ENCODE measurements at regions of chr4 and their contacts with region 1.

Region 1: GRCh38 chr4:38132107-38132673 is 172.0 kb downstream of the PTTG2 start:
- DNase-seq: peak; percentile 74
- H3K4me3 Mint-ChIP-seq: peak overlapping the region; percentile 2
- H3K27ac Mint-ChIP-seq: peak overlapping the region; percentile 93
- H3K4me1 Mint-ChIP-seq: peaks cover 63% of the 10 kb centered on the region
- H3K27me3 Mint-ChIP-seq: no peaks in the 10 kb centered on the region

Region 2: GRCh38 chr4:36921474-36922254 is 1210.5 kb before region 1 on chr4:
- intact Hi-C with region 1: no loop called
- DNase-seq: no peak
- H3K4me3 Mint-ChIP-seq: no peak overlapping the region
- H3K27ac Mint-ChIP-seq: no peak overlapping the region
- H3K4me1 Mint-ChIP-seq: no peaks in the 10 kb centered on the region
- H3K27me3 Mint-ChIP-seq: no peaks in the 10 kb centered on the region

Region 3: DNA sequence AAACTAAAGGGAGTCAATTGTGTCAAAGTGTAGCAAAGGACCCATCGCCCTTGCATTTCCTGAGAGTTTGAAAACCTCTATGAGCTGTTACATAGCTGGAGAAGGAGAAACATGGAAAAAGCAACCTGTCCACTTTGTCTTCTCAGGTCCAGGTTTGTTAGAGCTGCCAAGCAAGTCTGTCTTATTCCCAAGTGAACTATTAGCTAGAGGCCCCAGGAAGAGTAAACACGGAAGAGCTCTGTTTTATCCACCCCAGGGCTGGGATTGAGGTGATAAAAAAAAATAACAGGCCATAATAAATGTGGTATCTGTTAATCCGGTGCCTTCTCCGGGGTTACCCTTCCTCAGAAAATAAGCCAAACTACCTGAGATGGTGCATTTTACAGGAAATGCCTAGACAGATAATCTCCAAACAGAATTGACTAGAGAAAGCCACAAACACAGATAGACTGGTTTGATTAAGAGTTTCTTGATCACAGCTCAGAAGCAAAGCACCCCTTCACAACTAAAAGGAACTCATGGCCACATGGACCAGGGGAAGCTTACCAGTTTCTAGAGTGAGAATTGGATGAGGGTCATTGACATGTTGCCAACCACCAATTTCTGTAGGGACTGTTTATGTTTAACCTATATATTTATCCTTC is 410.1 kb before region 1 on chr4:
- intact Hi-C with region 1: loop called (anchors 1 kb)
- DNase-seq: peak; percentile 20
- H3K4me3 Mint-ChIP-seq: no peak overlapping the region
- H3K27ac Mint-ChIP-seq: no peak overlapping the region
- H3K4me1 Mint-ChIP-seq: peaks cover 33% of the 10 kb centered on the region
- H3K27me3 Mint-ChIP-seq: peaks cover 10% of the 10 kb centered on the region

Region 4: GRCh38 chr4:38062088-38062893 is 69.9 kb before region 1 on chr4:
- intact Hi-C with region 1: loop called (anchors 5 kb)
- DNase-seq: peak; percentile 36
- H3K4me3 Mint-ChIP-seq: peak overlapping the region; percentile 67
- H3K27ac Mint-ChIP-seq: peak overlapping the region; percentile 61
- H3K4me1 Mint-ChIP-seq: peaks cover 16% of the 10 kb centered on the region
- H3K27me3 Mint-ChIP-seq: no peaks in the 10 kb centered on the region

Region 5: GRCh38 chr4:38075370-38076152 is 56.6 kb before region 1 on chr4:
- intact Hi-C with region 1: no loop called
- DNase-seq: no peak
- H3K4me3 Mint-ChIP-seq: no peak overlapping the region
- H3K27ac Mint-ChIP-seq: no peak overlapping the region
- H3K4me1 Mint-ChIP-seq: peaks cover 23% of the 10 kb centered on the region
- H3K27me3 Mint-ChIP-seq: no peaks in the 10 kb centered on the region

Region 6: GRCh38 chr4:38179690-38180377 is 47.6 kb after region 1 on chr4:
- intact Hi-C with region 1: loop called (anchors 1 kb)
- DNase-seq: peak; percentile 59
- H3K4me3 Mint-ChIP-seq: no peak overlapping the region
- H3K27ac Mint-ChIP-seq: no peak overlapping the region
- H3K4me1 Mint-ChIP-seq: peaks cover 23% of the 10 kb centered on the region
- H3K27me3 Mint-ChIP-seq: peaks cover 25% of the 10 kb centered on the region

Region 7: DNA sequence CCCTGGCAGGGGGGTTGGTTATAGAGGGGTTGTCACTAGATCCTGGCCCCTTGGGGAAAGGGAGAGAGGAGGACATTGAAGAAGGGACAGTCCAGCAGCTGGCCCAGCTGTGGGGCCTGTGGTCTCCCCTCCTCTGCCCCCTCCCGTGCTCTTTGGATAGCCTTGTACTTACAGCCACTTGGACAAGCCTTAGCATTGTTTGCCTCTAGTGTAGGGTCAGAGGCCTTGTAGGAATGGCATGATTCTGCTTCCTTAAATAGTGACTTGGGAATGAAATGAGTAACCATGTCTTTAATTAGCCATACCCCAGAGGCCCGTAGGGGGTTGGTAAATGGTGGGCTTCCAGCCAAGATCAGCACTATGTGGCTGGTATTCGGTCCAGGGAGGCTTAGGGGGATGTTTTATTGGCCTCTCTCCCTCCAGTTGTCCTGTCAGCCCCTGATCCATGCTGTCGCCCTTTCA is 58.6 kb after region 1 on chr4:
- intact Hi-C with region 1: no loop called
- DNase-seq: no peak
- H3K4me3 Mint-ChIP-seq: no peak overlapping the region
- H3K27ac Mint-ChIP-seq: no peak overlapping the region
- H3K4me1 Mint-ChIP-seq: no peaks in the 10 kb centered on the region
- H3K27me3 Mint-ChIP-seq: peaks cover 29% of the 10 kb centered on the region

Region 8: DNA sequence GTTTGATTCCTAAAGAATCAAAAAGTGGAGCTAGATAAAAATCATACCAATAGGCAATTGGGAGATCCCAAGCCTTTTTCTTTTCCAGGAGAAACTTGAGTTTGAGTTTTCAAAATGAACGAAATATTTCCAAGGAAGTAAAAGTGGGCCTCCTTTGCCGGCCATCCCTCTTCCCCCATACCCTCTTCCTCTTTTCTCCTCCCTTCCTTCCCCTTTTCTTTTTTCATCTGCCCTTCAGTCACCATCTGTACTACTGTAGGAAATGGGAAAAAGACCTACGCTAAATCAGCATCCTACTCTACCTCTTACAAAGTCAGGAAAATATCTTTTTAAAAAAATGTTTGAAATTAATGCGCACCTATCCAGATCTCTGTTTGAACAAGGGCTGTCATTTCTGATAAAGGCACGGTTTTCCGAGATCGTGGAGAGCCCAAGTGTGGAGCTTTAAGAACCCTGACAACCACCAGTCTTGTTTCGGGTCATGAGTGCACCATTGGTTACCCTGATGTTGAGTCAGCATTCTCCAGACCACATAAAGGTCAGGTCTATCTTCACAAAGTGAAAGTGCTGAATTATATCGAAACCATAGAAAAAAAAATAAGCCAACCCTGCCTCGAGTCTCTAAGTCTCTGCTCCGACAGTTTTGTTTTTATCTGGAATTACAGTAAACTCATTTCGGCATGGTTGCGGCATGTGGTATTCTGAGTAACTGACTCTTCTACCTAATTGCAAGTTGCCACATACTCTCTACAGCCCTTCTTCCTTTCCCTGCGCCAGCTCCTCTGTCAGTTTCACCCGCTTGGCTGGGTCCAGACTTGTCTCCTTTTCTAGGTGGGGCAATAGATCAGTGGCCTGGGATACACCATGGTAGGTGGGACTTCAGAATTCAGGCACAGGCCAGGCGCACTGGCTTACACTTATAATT is 391.6 kb after region 1 on chr4:
- intact Hi-C with region 1: loop called (anchors 1 kb)
- DNase-seq: peak; percentile 54
- H3K4me3 Mint-ChIP-seq: no peak overlapping the region
- H3K27ac Mint-ChIP-seq: peak overlapping the region; percentile 57
- H3K4me1 Mint-ChIP-seq: peaks cover 11% of the 10 kb centered on the region
- H3K27me3 Mint-ChIP-seq: peaks cover 25% of the 10 kb centered on the region